ENCODE measurements at regions of chr10 and their contacts with region 1.

Region 1: DNA sequence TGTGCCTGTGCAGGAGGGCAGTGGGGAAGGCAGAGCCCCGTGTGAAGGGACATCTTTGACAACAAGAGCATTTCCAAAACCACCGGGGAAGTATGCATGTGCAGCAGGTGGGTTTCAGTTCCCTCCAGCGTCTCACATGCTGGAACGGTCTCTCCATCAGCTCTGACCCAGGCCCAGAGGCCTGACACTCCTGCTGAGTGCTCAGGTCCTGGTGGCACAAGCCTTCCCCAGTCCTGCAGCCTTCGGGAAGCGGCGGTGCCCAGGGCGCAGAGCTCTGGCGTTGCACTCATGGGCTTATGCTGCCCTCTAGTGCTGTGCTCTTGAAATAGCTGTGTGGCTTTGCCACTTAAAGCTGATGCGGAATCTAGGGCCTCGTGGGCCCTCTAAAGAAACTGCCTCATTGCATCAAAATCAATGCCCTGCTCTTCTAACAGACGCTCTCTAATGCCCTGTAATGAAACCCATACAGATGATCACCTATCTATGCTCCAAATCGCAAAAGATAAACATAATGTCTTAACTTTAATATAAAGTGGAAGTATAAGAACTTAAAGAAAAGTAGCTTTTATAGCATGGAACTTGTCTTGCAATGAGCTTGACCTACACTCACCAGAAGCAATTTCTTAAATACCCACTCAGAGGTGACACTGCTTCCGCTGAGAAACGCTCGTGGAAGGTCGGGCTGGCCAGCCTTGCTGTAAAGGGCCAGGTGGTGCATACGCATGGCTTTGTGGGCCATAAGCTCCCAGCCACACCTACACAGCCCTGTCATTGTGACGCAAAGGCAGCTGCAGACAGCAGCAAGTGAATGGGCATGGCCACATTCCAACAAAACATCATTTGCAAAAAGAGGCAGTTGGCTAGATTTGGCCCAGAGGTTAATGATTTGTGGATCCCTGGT is 38.6 kb downstream of the CLRN3 start:
- DNase-seq: no peak
- ATAC-seq: peak; percentile 95
- H3K4me3 ChIP-seq: no peak overlapping the region
- H3K27ac ChIP-seq: no peak overlapping the region
- H3K4me1 ChIP-seq: peaks cover 14% of the 10 kb centered on the region
- H3K27me3 ChIP-seq: no peaks in the 10 kb centered on the region
- CTCF ChIP-seq: peak; percentile 78 to 83 (median 80)
- EP300 ChIP-seq: no peak
- POLR2A ChIP-seq: no peak
- RAD21 ChIP-seq: peak; percentile 82

Region 2: DNA sequence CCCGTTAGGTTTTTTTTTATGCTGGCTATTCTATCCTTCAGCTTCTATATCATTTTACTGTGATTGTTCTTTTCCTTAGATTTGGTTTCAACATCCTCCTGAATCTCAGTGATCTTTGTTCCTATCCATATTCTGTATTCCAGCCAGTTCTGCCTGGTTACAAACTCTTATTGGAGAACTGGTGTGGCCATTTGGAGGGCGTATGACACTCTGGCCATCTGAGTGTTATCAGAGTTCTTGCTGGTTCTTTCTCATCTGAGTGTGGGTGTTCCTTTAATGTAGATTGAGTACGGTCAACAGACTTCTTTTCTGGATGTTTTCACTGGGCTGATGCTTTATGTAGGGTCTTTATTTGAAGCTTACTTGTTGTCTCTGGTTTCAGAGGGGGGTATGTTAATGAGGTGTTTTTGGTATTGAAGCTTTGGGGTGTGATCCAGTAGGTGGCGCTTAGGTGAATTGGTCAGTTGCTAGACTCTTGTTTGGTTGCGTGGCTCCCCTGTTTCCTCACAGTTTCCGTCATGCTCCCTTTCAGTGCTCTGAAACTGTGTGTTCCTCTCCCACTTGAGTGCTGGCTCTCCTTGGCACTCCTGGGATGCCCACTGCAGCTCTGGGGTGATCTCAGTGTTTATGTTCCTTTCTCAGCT is 1877.0 kb before region 1 on chr10:
- CTCF ChIA-PET with region 1: interaction called, 3 read pairs
- POLR2A ChIA-PET with region 1: no interaction called
- RAD21 ChIA-PET with region 1: no interaction called
- SMC1A ChIA-PET with region 1: no interaction called
- in situ Hi-C with region 1: loop called (anchors 5 kb)
- intact Hi-C with region 1: loop called (anchors 2 kb)
- DNase-seq: no peak
- ATAC-seq: 0 out of 3 replicates have a peak, but pooled peaks have one; percentile 37
- H3K4me3 ChIP-seq: no peak overlapping the region
- H3K27ac ChIP-seq: no peak overlapping the region
- H3K4me1 ChIP-seq: no peaks in the 10 kb centered on the region
- H3K27me3 ChIP-seq: no peaks in the 10 kb centered on the region
- CTCF ChIP-seq: peak; percentile 35 to 49 (median 39); a peak in 5 of 6 replicates
- EP300 ChIP-seq: no peak
- POLR2A ChIP-seq: no peak
- RAD21 ChIP-seq: no peak

Region 3: DNA sequence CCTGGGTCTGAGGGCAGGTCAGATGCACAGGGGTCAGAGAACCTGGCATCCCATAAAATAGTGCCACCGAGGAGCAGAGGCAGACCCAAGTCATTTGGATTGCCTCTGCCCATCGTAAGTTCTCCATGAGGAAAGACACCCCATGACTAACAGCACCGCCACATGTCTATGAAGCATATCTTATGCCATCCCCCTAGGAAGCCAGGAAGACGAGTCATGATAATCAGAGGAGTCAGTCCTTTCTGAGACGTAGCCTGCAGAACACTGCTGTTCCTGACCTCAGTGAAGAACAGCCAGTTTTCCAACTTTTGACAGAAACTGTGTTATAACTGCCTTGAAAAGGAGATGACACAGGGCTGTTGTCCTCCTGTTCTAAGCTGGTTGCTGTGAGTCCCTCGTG is 708.9 kb before region 1 on chr10:
- CTCF ChIA-PET with region 1: no interaction called
- POLR2A ChIA-PET with region 1: no interaction called
- RAD21 ChIA-PET with region 1: no interaction called
- SMC1A ChIA-PET with region 1: no interaction called
- in situ Hi-C with region 1: no loop called
- intact Hi-C with region 1: no loop called
- DNase-seq: no peak
- ATAC-seq: no peak
- H3K4me3 ChIP-seq: no peak overlapping the region
- H3K27ac ChIP-seq: no peak overlapping the region
- H3K4me1 ChIP-seq: no peaks in the 10 kb centered on the region
- H3K27me3 ChIP-seq: no peaks in the 10 kb centered on the region
- CTCF ChIP-seq: no peak
- EP300 ChIP-seq: no peak
- POLR2A ChIP-seq: no peak
- RAD21 ChIP-seq: no peak

Region 4: GRCh38 chr10:127563718-127564553 is 290.2 kb before region 1 on chr10:
- CTCF ChIA-PET with region 1: interaction called, 6 read pairs
- POLR2A ChIA-PET with region 1: no interaction called
- RAD21 ChIA-PET with region 1: interaction called, 8 read pairs
- SMC1A ChIA-PET with region 1: interaction called, 7 read pairs
- in situ Hi-C with region 1: no loop called
- intact Hi-C with region 1: loop called (anchors 1 kb)
- DNase-seq: no peak
- ATAC-seq: peak; percentile 73
- H3K4me3 ChIP-seq: no peak overlapping the region
- H3K27ac ChIP-seq: no peak overlapping the region
- H3K4me1 ChIP-seq: no peaks in the 10 kb centered on the region
- H3K27me3 ChIP-seq: no peaks in the 10 kb centered on the region
- CTCF ChIP-seq: peak; percentile 46 to 68 (median 58)
- EP300 ChIP-seq: no peak
- POLR2A ChIP-seq: no peak
- RAD21 ChIP-seq: 0 out of 2 replicates have a peak, but pooled peaks have one; percentile 26

Region 5: DNA sequence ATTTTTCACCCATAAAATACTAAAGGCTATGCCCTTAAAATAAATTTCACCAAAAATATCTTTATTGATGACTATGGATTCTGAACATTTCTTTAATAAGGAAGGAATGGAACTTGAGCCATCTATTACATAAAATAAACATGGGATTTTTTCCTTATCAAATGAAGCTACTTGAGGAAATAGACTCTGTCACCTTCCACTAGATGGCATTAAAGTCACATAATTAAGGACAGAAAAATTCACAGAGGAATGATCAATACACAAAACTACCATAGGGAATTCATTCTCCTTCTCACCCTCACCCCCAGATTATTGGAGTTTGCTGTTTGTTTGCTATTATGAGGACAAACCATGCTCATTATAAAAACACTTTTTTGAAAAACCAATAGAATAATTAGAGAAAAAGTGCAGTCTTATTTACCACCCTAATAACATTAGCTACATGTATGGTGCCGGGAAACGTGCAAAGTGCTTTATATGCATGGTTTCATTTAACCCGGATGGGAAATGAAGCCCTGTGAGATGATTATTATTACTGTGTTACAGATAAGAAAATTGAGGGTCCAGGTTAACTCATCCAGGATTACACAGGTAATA is 138.2 kb before region 1 on chr10:
- CTCF ChIA-PET with region 1: interaction called, 36 read pairs
- POLR2A ChIA-PET with region 1: no interaction called
- RAD21 ChIA-PET with region 1: interaction called, 23 read pairs
- SMC1A ChIA-PET with region 1: interaction called, 31 read pairs
- in situ Hi-C with region 1: loop called (anchors 10 kb)
- intact Hi-C with region 1: loop called (anchors 1 kb)
- DNase-seq: no peak
- ATAC-seq: no peak
- H3K4me3 ChIP-seq: no peak overlapping the region
- H3K27ac ChIP-seq: no peak overlapping the region
- H3K4me1 ChIP-seq: no peaks in the 10 kb centered on the region
- H3K27me3 ChIP-seq: no peaks in the 10 kb centered on the region
- CTCF ChIP-seq: peak; percentile 16 to 49 (median 34); a peak in 4 of 6 replicates
- EP300 ChIP-seq: no peak
- POLR2A ChIP-seq: no peak
- RAD21 ChIP-seq: peak; percentile 51

Region 6: GRCh38 chr10:127894146-127894545 is 40.0 kb after region 1 on chr10:
- CTCF ChIA-PET with region 1: no interaction called
- POLR2A ChIA-PET with region 1: no interaction called
- RAD21 ChIA-PET with region 1: no interaction called
- SMC1A ChIA-PET with region 1: no interaction called
- in situ Hi-C with region 1: no loop called
- intact Hi-C with region 1: no loop called
- DNase-seq: no peak
- ATAC-seq: no peak
- H3K4me3 ChIP-seq: no peak overlapping the region
- H3K27ac ChIP-seq: no peak overlapping the region
- H3K4me1 ChIP-seq: no peaks in the 10 kb centered on the region
- H3K27me3 ChIP-seq: no peaks in the 10 kb centered on the region
- CTCF ChIP-seq: no peak
- EP300 ChIP-seq: no peak
- POLR2A ChIP-seq: no peak
- RAD21 ChIP-seq: no peak

Region 7: GRCh38 chr10:128011175-128011979 is 157.3 kb after region 1 on chr10:
- CTCF ChIA-PET with region 1: interaction called, 11 read pairs
- POLR2A ChIA-PET with region 1: no interaction called
- RAD21 ChIA-PET with region 1: interaction called, 3 read pairs
- SMC1A ChIA-PET with region 1: interaction called, 4 read pairs
- in situ Hi-C with region 1: no loop called
- intact Hi-C with region 1: loop called (anchors 2 kb)
- DNase-seq: peak; percentile 19
- ATAC-seq: peak; percentile 93
- H3K4me3 ChIP-seq: no peak overlapping the region
- H3K27ac ChIP-seq: no peak overlapping the region
- H3K4me1 ChIP-seq: no peaks in the 10 kb centered on the region
- H3K27me3 ChIP-seq: 0 out of 4 replicates have a peak, but pooled peaks cover 0 to 2% of the 10 kb centered on the region in 2 experiments
- CTCF ChIP-seq: peak; percentile 97 to 99 (median 98); a peak in 5 of 6 replicates
- EP300 ChIP-seq: no peak
- POLR2A ChIP-seq: no peak
- RAD21 ChIP-seq: peak; percentile 73

Measured in GM12878 (cell line).